Mammary epithelial cell (primary cell): ENCODE measurements at regions of chr21 and their contacts with region 1.

Region 1: GRCh38 chr21:38733973-38734546 is 71.7 kb upstream of the ETS2 start:
- DNase-seq: peak; percentile 46
- H3K4me3 ChIP-seq: no peak overlapping the region
- H3K27ac ChIP-seq: no peak overlapping the region
- H3K4me1 ChIP-seq: peaks cover 15% of the 10 kb centered on the region
- H3K27me3 ChIP-seq: no peaks in the 10 kb centered on the region
- CTCF ChIP-seq: peak; percentile 94 to 97

Region 2: DNA sequence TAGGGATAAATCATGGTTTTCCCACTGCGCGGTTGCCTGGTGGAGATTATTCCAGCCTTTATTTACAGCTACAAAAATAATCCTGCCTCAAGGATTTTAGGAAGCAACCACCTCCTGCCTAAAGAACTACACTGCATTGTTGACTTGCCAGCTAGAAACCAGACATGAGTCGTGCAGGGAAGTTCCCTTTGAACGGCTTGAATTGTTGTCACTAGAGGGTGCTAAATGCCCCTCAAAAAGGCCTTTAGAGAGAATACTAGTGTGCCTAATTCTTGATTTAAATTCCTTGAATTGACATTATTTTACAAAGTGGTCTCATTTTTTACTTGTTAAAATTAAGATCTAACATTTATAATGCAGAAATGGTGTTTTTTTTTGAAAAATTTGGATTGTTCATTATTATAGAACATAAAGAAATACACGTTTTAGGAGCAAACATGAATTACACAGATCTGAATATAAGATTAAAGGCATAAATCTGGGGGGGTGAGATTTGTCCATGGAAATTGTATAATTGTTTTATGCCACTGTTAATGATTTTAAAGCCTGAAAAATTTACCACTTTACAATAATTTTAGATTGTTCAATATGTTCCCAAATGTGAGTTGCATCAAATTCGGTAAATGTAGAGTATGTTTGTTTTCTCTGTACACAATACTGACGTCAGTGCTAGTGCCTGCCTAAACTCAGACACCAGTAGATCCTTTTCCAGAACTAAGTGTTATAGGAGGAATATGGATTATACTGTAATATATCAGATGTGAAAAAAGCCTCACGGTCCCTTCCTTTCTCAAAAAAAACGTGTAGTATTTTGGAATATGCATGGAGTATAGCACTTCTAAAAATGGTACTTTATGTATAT is 228.2 kb before region 1 on chr21:
- CTCF ChIA-PET with region 1: no interaction called
- dilution Hi-C with region 1: no loop called
- in situ Hi-C with region 1: no loop called
- intact Hi-C with region 1: loop called (anchors 1 kb)
- DNase-seq: peak; percentile 76
- H3K4me3 ChIP-seq: no peak overlapping the region
- H3K27ac ChIP-seq: peak overlapping the region; percentile 5
- H3K4me1 ChIP-seq: peaks cover 20% of the 10 kb centered on the region
- H3K27me3 ChIP-seq: no peaks in the 10 kb centered on the region
- CTCF ChIP-seq: peak; percentile 73 to 78

Region 3: DNA sequence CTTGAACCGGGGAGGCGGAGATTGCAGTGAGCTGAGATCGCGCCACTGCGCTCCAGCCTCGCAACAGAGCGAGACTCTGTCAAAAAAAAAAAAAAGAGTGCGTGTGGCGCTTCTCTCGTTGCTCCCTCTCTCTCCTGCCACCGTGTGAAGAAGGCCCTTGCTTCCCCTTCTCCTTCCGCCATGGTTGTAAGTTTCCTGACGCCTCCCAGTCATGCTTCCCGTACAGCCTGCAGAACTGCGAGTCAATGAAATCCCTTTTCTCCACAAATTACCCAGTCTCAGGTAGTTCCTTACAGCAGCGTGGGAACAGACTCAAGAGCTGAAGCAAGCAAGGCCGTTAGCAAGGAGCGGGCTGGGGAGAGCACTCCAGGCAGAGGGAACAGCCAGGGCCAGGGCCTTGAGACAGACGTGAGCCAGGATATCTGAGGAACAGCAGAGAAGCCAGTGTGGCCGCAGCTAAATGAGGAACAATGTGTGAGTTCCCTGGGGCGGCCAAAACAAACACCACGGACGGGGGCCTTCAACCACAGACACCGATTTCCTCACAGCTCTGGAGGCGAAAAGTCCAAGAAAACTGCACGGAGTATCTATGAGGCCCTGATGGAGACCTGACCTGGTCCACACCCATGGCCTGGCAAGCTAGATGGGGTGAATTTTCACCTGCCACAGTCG is 17.5 kb after region 1 on chr21:
- CTCF ChIA-PET with region 1: no interaction called
- dilution Hi-C with region 1: no loop called
- in situ Hi-C with region 1: no loop called
- intact Hi-C with region 1: no loop called
- DNase-seq: no peak
- H3K4me3 ChIP-seq: no peak overlapping the region
- H3K27ac ChIP-seq: no peak overlapping the region
- H3K4me1 ChIP-seq: peaks cover 14% of the 10 kb centered on the region
- H3K27me3 ChIP-seq: no peaks in the 10 kb centered on the region
- CTCF ChIP-seq: no peak

Region 4: DNA sequence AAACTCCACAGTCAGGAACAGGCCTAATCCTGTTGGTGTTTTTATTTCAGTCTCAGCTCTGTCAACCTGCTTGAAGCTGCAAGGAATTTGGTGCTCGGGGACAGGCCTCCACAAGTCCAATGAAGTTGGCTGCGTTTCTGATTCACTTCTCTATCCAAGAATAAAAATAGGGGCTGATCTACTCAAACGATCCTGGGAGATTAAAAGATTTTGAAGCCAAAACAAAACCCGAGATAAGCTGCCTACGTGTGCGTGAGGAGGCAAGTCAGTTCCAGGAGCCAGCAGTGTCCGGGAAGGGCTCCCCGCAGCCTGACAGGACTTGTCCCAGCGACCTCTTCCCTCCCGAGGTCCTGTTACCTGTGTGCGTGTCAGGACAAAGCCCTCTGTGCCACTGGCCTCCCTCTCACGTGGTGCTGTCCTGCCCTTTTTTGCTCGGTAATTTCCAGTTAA is 169.7 kb after region 1 on chr21:
- CTCF ChIA-PET with region 1: no interaction called
- dilution Hi-C with region 1: no loop called
- in situ Hi-C with region 1: loop called in 1 of 2 experiments (anchors 10 kb)
- intact Hi-C with region 1: loop called (anchors 5 kb)
- DNase-seq: peak; percentile 100
- H3K4me3 ChIP-seq: no peak overlapping the region
- H3K27ac ChIP-seq: peak overlapping the region; percentile 91
- H3K4me1 ChIP-seq: peaks cover 40% of the 10 kb centered on the region
- H3K27me3 ChIP-seq: no peaks in the 10 kb centered on the region
- CTCF ChIP-seq: no peak

Region 5: DNA sequence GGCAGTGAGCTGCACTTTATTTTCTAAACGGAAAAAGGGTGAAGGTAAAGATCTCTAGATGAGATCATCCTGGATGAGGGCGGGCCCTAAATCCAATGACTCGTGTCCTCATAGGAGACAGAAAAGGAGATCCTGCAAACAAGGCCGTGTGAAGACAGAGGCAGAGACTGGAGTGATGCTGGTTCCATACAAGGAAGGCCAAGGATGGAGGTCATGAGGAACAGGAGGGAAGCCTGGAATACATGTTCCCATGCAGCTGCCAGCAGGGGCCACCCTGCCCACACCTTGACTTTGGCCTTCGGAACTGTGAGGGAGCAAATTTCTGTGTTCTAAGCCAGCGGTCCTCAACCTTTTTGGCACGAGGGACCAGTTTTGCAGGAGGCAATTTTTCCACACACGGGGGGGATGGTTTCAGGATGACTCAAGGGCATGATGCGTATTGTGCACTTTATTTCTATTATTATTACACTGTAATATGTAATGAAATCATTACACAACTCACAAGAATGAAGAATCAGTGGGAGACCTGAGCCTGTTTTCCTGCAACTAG is 354.8 kb after region 1 on chr21:
- CTCF ChIA-PET with region 1: no interaction called
- dilution Hi-C with region 1: no loop called
- in situ Hi-C with region 1: no loop called
- intact Hi-C with region 1: loop called (anchors 5 kb)
- DNase-seq: peak; percentile 61
- H3K4me3 ChIP-seq: no peak overlapping the region
- H3K27ac ChIP-seq: no peak overlapping the region
- H3K4me1 ChIP-seq: no peaks in the 10 kb centered on the region
- H3K27me3 ChIP-seq: no peaks in the 10 kb centered on the region
- CTCF ChIP-seq: peak in 1 of 2 donors; percentile 4

Region 6: GRCh38 chr21:39137248-39138178 is 403.5 kb after region 1 on chr21:
- CTCF ChIA-PET with region 1: interaction called, 3 read pairs
- dilution Hi-C with region 1: no loop called
- in situ Hi-C with region 1: loop called (anchors 5 kb)
- intact Hi-C with region 1: loop called (anchors 1 kb)
- DNase-seq: peak; percentile 51
- H3K4me3 ChIP-seq: no peak overlapping the region
- H3K27ac ChIP-seq: no peak overlapping the region
- H3K4me1 ChIP-seq: peaks cover 14% of the 10 kb centered on the region
- H3K27me3 ChIP-seq: no peaks in the 10 kb centered on the region
- CTCF ChIP-seq: peak; percentile 10 to 44